ENCODE measurements at regions of chr22 and their contacts with region 1.

Region 1: DNA sequence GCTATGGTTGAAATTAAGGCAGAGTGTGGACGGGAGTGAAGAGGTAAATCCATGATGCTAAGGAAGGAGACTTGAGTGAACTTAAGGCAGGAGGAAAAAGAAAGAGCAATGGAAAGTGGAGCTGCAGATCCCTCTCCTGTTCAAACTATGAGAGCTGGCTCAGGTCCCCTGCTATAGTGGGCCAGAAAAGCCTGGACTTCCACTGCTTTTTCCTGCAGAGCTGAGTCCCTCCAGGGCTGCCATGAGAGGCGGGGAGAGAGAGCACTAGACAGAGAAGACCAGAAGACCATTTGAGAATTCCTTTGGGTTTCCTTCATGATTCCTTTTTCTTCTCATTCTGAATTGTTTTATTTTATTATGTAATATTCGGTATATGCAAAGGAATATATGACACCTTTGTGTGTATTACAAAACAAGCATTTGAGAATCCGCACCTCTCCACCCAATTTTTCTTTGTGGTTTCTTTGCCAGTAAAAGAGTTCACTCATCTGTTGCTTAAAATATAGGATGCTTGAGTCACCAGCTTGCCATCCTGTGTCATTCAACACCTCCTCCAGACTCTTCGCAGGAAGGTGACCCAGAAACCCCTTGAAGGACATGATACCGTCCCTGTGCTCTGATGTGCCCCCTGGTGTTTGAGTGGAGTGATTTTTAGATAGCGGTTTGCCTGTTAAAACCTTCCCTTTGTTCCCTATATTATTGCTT is 24.4 kb downstream of the SREBF2 start:
- DNase-seq: peak; percentile 85
- ATAC-seq: peak; percentile 73
- H3K4me3 Mint-ChIP-seq: no peak overlapping the region
- H3K27ac Mint-ChIP-seq: peak overlapping the region; percentile 79
- H3K4me1 Mint-ChIP-seq: peaks cover 67% of the 10 kb centered on the region
- H3K27me3 Mint-ChIP-seq: no peaks in the 10 kb centered on the region

Region 2: DNA sequence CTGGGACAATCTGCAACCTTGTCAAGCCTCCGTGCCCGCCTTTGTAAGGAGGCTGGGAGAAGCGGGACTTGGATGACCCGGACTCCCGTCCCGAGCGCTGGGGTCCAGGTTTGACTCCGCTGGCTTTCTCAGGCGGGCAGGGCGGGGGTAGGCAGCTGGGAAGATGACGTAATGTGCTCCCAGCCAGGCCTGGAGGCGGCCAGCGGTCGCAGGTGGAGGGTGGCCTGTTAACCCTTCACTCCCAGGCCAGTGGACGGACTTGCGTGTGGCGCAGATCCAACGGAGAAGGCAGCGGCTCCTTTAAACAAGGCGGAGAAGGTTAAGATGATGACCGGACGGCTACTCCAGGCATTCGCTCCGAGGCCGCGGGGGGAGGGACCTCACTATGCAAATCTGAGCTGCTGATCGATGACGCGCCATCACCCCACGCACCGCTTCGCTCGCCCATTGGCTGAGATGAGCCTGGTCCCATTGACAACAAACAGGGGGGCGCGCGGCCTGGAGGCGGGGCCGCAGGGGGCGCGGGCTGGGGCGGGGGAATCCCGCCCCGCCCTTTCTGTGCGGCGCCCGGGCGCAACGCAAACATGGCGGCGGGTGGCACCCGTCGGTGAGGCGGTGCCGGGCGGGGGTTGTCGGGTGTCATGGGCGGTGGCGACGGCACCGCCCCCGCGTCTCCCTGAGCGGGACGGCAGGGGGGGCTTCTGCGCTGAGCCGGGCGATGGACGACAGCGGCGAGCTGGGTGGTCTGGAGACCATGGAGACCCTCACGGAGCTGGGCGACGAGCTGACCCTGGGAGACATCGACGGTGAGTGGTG is 24.5 kb before region 1 on chr22 and contains the start of gene SREBF2:
- CTCF ChIA-PET with region 1: interaction called, 37 read pairs
- DNase-seq: peak; percentile 100
- ATAC-seq: peak; percentile 95
- H3K4me3 Mint-ChIP-seq: peak within 1 kb of the TSS; percentile 82
- H3K27ac Mint-ChIP-seq: peak within 1 kb of the TSS; percentile 99
- H3K4me1 Mint-ChIP-seq: peaks cover 44% of the 10 kb centered on the region
- H3K27me3 Mint-ChIP-seq: no peaks in the 10 kb centered on the region
- total RNA-seq, gene SREBF2: 130 to 135 TPM

Region 3: GRCh38 chr22:41946629-41947423 is 89.5 kb after region 1 on chr22 and contains the start of gene CENPM:
- CTCF ChIA-PET with region 1: interaction called, 11 read pairs
- DNase-seq: peak; percentile 97
- ATAC-seq: peak; percentile 97
- H3K4me3 Mint-ChIP-seq: peak within 1 kb of the TSS; percentile 93
- H3K27ac Mint-ChIP-seq: peak within 1 kb of the TSS; percentile 92
- H3K4me1 Mint-ChIP-seq: peaks cover 44% of the 10 kb centered on the region
- H3K27me3 Mint-ChIP-seq: no peaks in the 10 kb centered on the region
- total RNA-seq, gene CENPM: 74.0 to 95.8 TPM

Measured in activated CD8-positive, alpha-beta memory T cell treated with anti-CD3 and anti-CD28 coated beads, Interleukin-2, amount 10 ng/mL, durations not matched to agents 7 days and 5 days (primary cell).